CD4-positive, alpha-beta memory T cell (primary cell): ENCODE measurements at regions of chrX and their contacts with region 1.

Region 1: GRCh38 chrX:74133156-74133796 is 170.7 kb upstream of the ZCCHC13 start:
- DNase-seq: peak in 4 of 5 donors; percentile 57 to 63 (median 60)
- H3K4me3 ChIP-seq: no peak overlapping the region
- H3K4me3 Mint-ChIP-seq: no peak overlapping the region
- H3K27ac ChIP-seq: no peak overlapping the region
- H3K27ac Mint-ChIP-seq: no peak overlapping the region
- H3K4me1 ChIP-seq: no peaks in the 10 kb centered on the region
- H3K4me1 Mint-ChIP-seq: peaks cover 0 to 2% (median 0%) of the 10 kb centered on the region in 4 donors
- H3K27me3 ChIP-seq: no peaks in the 10 kb centered on the region
- H3K27me3 Mint-ChIP-seq: no peaks in the 10 kb centered on the region

Region 2: DNA sequence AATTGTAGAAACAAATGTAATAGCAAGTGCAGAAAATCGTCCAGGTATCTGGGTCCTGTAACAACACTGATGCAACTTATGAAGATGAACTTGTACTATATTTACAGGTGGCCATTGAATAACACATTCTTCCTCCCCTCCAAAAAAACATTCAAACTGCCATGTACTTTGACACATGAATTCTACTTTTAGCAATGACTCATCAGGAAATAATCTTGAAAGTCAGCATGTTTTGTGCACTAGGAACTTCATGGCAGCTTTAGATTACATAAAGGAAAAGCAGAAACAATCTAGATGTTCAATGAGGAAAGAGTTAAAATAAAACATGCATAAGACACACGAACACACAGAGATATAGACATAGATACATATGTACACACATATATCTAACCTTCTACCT is 1056.4 kb before region 1 on chrX:
- CTCF ChIA-PET with region 1: no interaction called
- POLR2A ChIA-PET with region 1: no interaction called
- intact Hi-C with region 1: loop called (anchors 10 kb)
- DNase-seq: no peak
- H3K4me3 ChIP-seq: no peak overlapping the region
- H3K4me3 Mint-ChIP-seq: no peak overlapping the region
- H3K27ac ChIP-seq: no peak overlapping the region
- H3K27ac Mint-ChIP-seq: no peak overlapping the region
- H3K4me1 ChIP-seq: no peaks in the 10 kb centered on the region
- H3K4me1 Mint-ChIP-seq: no peaks in the 10 kb centered on the region
- H3K27me3 ChIP-seq: no peaks in the 10 kb centered on the region
- H3K27me3 Mint-ChIP-seq: peaks cover 5 to 7% of the 10 kb centered on the region in 2 donors

Region 3: GRCh38 chrX:73182502-73183114 is 950.7 kb before region 1 on chrX:
- CTCF ChIA-PET with region 1: no interaction called
- POLR2A ChIA-PET with region 1: no interaction called
- intact Hi-C with region 1: no loop called
- DNase-seq: no peak
- H3K4me3 ChIP-seq: no peak overlapping the region
- H3K4me3 Mint-ChIP-seq: no peak overlapping the region
- H3K27ac ChIP-seq: no peak overlapping the region
- H3K27ac Mint-ChIP-seq: no peak overlapping the region
- H3K4me1 ChIP-seq: no peaks in the 10 kb centered on the region
- H3K4me1 Mint-ChIP-seq: no peaks in the 10 kb centered on the region
- H3K27me3 ChIP-seq: no peaks in the 10 kb centered on the region
- H3K27me3 Mint-ChIP-seq: peaks cover 1 to 3% of the 10 kb centered on the region in 2 donors

Region 4: DNA sequence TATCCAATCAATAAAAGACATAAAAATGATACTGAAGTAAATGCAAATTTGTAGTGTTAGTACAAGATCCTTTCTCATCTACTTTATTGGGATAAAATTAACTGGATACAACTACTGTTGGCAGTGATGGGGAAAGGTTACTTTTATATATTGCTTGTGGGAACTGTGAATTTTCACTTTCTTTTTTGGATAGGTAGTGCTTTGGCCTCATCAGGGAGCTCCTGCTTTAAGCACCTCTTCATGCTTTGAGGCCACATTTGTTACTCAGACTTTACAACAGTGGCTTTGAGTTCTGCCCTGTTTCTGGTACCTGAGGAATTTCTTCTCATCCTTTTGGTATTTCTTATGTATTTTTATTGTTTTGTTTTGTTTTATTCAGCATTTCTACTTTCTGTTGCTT is 146.1 kb before region 1 on chrX:
- CTCF ChIA-PET with region 1: no interaction called
- POLR2A ChIA-PET with region 1: no interaction called
- intact Hi-C with region 1: no loop called
- DNase-seq: no peak
- H3K4me3 ChIP-seq: no peak overlapping the region
- H3K4me3 Mint-ChIP-seq: no peak overlapping the region
- H3K27ac ChIP-seq: no peak overlapping the region
- H3K27ac Mint-ChIP-seq: peak overlapping the region in 2 of 7 donors; percentile 19 to 27
- H3K4me1 ChIP-seq: peaks cover 7% of the 10 kb centered on the region
- H3K4me1 Mint-ChIP-seq: peaks cover 2 to 13% (median 4%) of the 10 kb centered on the region in 4 donors
- H3K27me3 ChIP-seq: no peaks in the 10 kb centered on the region
- H3K27me3 Mint-ChIP-seq: no peaks in the 10 kb centered on the region

Region 5: GRCh38 chrX:74015379-74016019 is 117.8 kb before region 1 on chrX:
- CTCF ChIA-PET with region 1: no interaction called
- POLR2A ChIA-PET with region 1: no interaction called
- intact Hi-C with region 1: loop called (anchors 2 kb)
- DNase-seq: peak; percentile 47 to 72 (median 71)
- H3K4me3 ChIP-seq: no peak overlapping the region
- H3K4me3 Mint-ChIP-seq: no peak overlapping the region
- H3K27ac ChIP-seq: no peak overlapping the region
- H3K27ac Mint-ChIP-seq: peak overlapping the region in 2 of 7 donors; percentile 33 to 39
- H3K4me1 ChIP-seq: no peaks in the 10 kb centered on the region
- H3K4me1 Mint-ChIP-seq: peaks cover 7 to 14% (median 9%) of the 10 kb centered on the region in 4 donors
- H3K27me3 ChIP-seq: no peaks in the 10 kb centered on the region
- H3K27me3 Mint-ChIP-seq: peaks cover 0 to 1% of the 10 kb centered on the region in 2 donors

Region 6: GRCh38 chrX:74230094-74230493 is 96.8 kb after region 1 on chrX:
- CTCF ChIA-PET with region 1: no interaction called
- POLR2A ChIA-PET with region 1: no interaction called
- intact Hi-C with region 1: no loop called
- DNase-seq: no peak
- H3K4me3 ChIP-seq: no peak overlapping the region
- H3K4me3 Mint-ChIP-seq: no peak overlapping the region
- H3K27ac ChIP-seq: no peak overlapping the region
- H3K27ac Mint-ChIP-seq: no peak overlapping the region
- H3K4me1 ChIP-seq: no peaks in the 10 kb centered on the region
- H3K4me1 Mint-ChIP-seq: peaks cover 0 to 4% (median 2%) of the 10 kb centered on the region in 4 donors
- H3K27me3 ChIP-seq: no peaks in the 10 kb centered on the region
- H3K27me3 Mint-ChIP-seq: no peaks in the 10 kb centered on the region

Region 7: GRCh38 chrX:74343343-74344279 is 210.3 kb after region 1 on chrX:
- CTCF ChIA-PET with region 1: interaction called, 7 read pairs
- POLR2A ChIA-PET with region 1: no interaction called
- intact Hi-C with region 1: loop called (anchors 1 kb)
- DNase-seq: peak; percentile 43 to 57 (median 47)
- H3K4me3 ChIP-seq: no peak overlapping the region
- H3K4me3 Mint-ChIP-seq: no peak overlapping the region
- H3K27ac ChIP-seq: no peak overlapping the region
- H3K27ac Mint-ChIP-seq: no peak overlapping the region
- H3K4me1 ChIP-seq: no peaks in the 10 kb centered on the region
- H3K4me1 Mint-ChIP-seq: no peaks in the 10 kb centered on the region
- H3K27me3 ChIP-seq: no peaks in the 10 kb centered on the region
- H3K27me3 Mint-ChIP-seq: peaks cover 0 to 3% of the 10 kb centered on the region in 2 donors